ENCODE measurements at regions of chr11 and their contacts with region 1.

Region 1: GRCh38 chr11:120268686-120269085 is 28.7 kb downstream of the POU2F3 start:
- DNase-seq: no peak
- ATAC-seq: no peak
- H3K4me3 ChIP-seq: no peak overlapping the region
- H3K27ac ChIP-seq: no peak overlapping the region
- H3K4me1 ChIP-seq: no peaks in the 10 kb centered on the region
- H3K27me3 ChIP-seq: peaks cover 33% of the 10 kb centered on the region
- CTCF ChIP-seq: no peak
- POLR2A ChIP-seq: no peak
- RAD21 ChIP-seq: no peak

Region 2: GRCh38 chr11:120284296-120284695 is 15.6 kb after region 1 on chr11:
- CTCF ChIA-PET with region 1: no interaction called
- POLR2A ChIA-PET with region 1: no interaction called
- dilution Hi-C with region 1: no loop called
- in situ Hi-C with region 1: no loop called
- intact Hi-C with region 1: loop called (anchors 1 kb)
- DNase-seq: no peak
- ATAC-seq: no peak
- H3K4me3 ChIP-seq: no peak overlapping the region
- H3K27ac ChIP-seq: no peak overlapping the region
- H3K4me1 ChIP-seq: no peaks in the 10 kb centered on the region
- H3K27me3 ChIP-seq: peaks cover 38% of the 10 kb centered on the region
- CTCF ChIP-seq: no peak
- POLR2A ChIP-seq: no peak
- RAD21 ChIP-seq: no peak

Region 3: DNA sequence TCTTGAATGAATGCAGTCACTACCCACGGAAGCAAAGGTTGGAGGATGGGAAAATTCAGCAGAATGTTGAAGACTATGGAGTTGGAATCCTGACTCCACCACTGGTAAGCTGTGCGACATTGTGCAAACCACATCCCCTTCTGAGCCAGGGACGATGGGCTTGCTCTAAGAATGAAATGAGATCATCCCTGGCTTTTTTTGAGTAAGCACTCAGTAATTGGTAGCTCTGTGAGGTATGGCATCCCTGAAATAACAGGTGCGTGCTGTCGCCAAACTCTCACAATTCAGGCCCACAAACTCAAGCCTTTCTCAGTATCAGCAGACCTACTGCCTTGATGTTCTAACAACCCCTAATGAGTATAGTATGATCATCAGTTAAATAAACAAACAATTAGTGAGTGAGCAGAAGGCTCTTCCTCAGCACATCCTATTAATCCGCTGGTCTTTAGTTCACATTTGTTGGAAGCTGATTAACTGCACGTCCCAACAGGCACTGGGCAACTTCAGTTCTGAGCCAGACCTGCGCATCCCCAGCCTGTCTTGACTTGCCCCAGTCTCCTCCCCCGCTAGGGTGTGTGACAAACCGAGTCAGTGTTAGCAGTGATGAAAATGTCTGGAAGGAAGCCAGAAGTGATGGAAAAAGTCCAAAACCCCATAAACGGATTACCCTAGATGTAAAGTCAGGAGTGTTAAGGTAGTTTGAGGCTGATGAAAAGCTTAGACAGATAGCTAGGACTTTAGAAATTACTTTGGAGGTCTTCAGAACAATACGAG is 478.3 kb after region 1 on chr11:
- CTCF ChIA-PET with region 1: no interaction called
- POLR2A ChIA-PET with region 1: no interaction called
- dilution Hi-C with region 1: no loop called
- in situ Hi-C with region 1: no loop called
- intact Hi-C with region 1: no loop called
- DNase-seq: no peak
- ATAC-seq: no peak
- H3K4me3 ChIP-seq: no peak overlapping the region
- H3K27ac ChIP-seq: no peak overlapping the region
- H3K4me1 ChIP-seq: no peaks in the 10 kb centered on the region
- H3K27me3 ChIP-seq: peaks cover 16% of the 10 kb centered on the region
- CTCF ChIP-seq: no peak
- POLR2A ChIP-seq: no peak
- RAD21 ChIP-seq: no peak